ENCODE measurements at regions of chr15 and their contacts with region 1.

Region 1: DNA sequence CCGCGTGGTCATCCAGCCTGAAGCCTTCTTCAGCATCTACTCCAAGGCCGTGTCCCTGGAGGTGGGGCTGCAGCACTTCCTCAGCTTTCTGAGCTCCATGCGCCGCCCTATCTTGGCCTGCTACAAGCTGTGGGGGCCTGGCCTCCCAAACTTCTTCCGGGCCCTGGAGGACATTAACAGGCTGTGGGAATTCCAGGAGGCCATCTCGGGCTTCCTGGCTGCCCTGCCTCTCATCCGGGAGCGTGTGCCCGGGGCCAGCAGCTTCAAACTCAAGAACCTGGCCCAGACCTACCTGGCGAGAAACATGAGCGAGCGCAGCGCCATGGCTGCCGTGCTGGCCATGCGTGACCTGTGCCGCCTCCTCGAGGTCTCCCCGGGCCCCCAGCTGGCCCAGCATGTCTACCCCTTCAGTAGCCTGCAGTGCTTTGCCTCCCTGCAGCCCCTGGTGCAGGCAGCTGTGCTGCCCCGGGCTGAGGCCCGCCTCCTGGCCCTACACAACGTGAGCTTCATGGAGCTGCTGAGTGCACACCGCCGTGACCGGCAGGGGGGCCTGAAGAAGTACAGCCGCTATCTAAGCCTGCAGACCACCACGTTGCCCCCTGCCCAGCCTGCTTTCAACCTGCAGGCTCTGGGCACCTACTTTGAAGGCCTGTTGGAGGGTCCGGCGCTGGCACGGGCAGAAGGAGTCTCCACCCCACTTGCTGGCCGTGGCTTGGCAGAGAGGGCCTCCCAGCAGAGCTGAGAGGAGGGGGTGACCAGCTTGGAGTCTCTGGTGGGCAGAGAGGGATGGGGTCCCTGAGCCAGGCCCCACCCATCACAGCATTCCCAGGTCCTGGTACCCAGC is 37.9 kb downstream of the GOLGA6A start:
- DNase-seq: no peak
- ATAC-seq: no peak
- H3K4me3 Mint-ChIP-seq: no peak overlapping the region
- H3K27ac Mint-ChIP-seq: no peak overlapping the region
- H3K4me1 Mint-ChIP-seq: peaks cover 21% of the 10 kb centered on the region
- H3K27me3 Mint-ChIP-seq: peaks cover 6% of the 10 kb centered on the region; the same call in 1 of the 2 replicates
- CTCF ChIP-seq: no peak

Region 2: DNA sequence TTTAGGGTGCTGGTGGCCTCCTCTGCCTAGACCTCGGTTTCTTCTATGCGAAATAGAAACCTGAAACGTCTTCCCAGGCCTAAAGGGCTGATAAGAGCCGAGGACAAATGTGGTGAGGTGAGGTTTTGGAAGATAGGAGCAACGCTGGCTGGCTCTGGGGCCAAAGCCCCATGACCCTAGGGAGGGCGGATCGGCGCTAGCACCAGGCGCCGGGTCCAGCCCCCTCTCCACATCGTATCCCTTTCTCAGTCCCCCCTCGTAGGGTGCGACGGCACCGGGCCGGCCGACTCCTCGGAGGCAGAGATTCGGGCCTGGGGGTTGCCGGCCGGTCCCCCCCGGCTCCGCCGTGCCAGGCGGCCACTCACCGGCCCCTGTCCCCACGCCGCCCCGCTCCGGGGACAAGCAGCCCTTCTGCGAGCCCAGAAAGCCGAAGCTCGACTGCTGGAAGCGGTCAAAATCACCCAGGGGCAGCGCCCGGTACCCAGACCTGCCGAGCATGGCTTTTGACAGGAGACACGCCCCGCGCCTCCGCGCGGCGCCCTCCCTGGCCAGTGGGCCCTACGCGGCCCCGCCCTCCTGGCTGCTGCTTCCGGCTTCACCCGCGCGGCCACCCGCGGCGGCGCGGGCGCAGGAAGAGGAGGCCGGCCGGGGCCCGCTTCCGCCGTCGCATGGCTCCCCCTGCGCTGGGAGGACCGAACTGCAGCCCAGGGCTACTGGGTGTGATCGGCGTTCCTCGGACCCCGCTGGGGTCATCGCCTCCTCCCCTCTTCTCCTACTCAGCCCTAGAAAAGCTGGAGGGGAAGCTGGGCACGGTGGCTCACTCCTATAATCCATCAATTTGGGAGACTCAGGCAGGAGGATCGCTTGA is 52.5 kb before region 1 on chr15 and contains the start of gene STOML1:
- CTCF ChIA-PET with region 1: interaction called, 89 read pairs
- POLR2A ChIA-PET with region 1: interaction called, 3 read pairs
- DNase-seq: peak; percentile 97
- ATAC-seq: peak; percentile 68
- H3K4me3 Mint-ChIP-seq: peak within 1 kb of the TSS; percentile 74
- H3K27ac Mint-ChIP-seq: no peak within 1 kb of the TSS
- H3K4me1 Mint-ChIP-seq: peaks cover 30% of the 10 kb centered on the region
- H3K27me3 Mint-ChIP-seq: peaks cover 13% of the 10 kb centered on the region
- CTCF ChIP-seq: peak; percentile 81
- total RNA-seq, gene STOML1: 5.0 to 5.5 TPM (median 5.4 TPM) in 3 replicates

Region 3: DNA sequence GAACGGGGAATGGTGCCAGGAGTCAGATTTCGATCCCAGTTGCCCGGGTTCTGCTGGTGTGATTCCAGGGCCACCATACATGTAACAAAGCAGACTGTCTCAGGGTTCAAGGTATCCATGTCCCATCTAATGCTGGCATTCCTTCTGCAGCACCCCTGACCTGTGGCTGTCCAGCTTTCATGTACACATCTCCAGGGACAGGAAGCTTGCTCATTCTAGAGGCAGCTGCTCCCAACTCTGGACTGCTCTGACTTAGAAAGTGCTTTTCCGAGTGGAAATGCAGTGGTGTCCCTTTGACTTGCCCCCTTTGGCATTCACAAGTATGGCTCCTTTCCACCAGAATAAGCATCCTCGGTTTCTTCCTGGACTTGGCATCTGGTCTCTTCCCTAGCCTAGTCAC is 19.1 kb before region 1 on chr15:
- CTCF ChIA-PET with region 1: interaction called, 11 read pairs
- POLR2A ChIA-PET with region 1: no interaction called
- DNase-seq: no peak
- ATAC-seq: no peak
- H3K4me3 Mint-ChIP-seq: no peak overlapping the region
- H3K27ac Mint-ChIP-seq: no peak overlapping the region
- H3K4me1 Mint-ChIP-seq: no peaks in the 10 kb centered on the region
- H3K27me3 Mint-ChIP-seq: no peaks in the 10 kb centered on the region
- CTCF ChIP-seq: no peak

Region 4: DNA sequence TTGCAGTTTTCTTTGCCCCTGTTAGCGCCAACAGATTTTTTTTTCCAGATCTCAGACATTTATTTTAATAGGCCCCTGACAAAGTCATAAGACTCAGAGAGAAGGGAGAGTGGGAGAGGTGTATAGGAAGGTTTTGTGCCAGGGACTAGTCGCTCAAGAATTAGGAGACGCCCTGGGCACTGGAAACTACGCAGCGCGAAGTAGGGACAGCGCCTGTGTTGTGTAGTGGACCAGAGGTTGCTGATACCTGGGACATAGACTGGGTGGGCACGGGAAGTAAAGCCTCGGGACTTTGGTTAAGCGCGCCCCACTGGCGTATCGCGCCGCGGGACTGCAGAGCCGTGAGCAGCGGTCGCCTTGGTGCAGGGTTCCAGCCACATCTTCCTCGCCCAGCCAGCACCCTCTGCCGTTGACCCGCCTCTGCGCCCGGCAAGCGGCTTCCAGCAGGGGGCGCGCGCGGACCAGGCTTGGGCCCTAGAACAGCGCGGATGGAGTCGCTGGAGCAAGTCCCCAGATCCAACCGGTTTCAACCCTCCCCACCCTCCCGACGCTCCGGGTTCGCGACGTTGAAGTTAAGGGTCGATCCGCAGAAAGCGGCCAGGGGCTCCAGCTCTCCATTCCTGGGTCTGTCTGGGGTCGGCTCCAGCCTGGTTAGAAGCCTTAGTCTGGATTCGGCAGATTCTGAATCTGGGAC is 82.9 kb after region 1 on chr15:
- CTCF ChIA-PET with region 1: interaction called, 19 read pairs
- POLR2A ChIA-PET with region 1: interaction called, 9 read pairs
- DNase-seq: peak; percentile 98
- ATAC-seq: peak; percentile 69
- H3K4me3 Mint-ChIP-seq: peak overlapping the region; percentile 73
- H3K27ac Mint-ChIP-seq: no peak overlapping the region
- H3K4me1 Mint-ChIP-seq: peaks cover 60% of the 10 kb centered on the region
- H3K27me3 Mint-ChIP-seq: peaks cover 76% of the 10 kb centered on the region
- CTCF ChIP-seq: peak; percentile 99

Region 5: GRCh38 chr15:74302821-74303359 is 258.4 kb after region 1 on chr15:
- CTCF ChIA-PET with region 1: interaction called, 45 read pairs
- POLR2A ChIA-PET with region 1: no interaction called
- DNase-seq: peak; percentile 86
- ATAC-seq: peak; percentile 67
- H3K4me3 Mint-ChIP-seq: peak overlapping the region; percentile 37
- H3K27ac Mint-ChIP-seq: no peak overlapping the region
- H3K4me1 Mint-ChIP-seq: peaks cover 79% of the 10 kb centered on the region
- H3K27me3 Mint-ChIP-seq: peaks cover 57% of the 10 kb centered on the region
- CTCF ChIP-seq: peak; percentile 80

Region 6: GRCh38 chr15:74315626-74316025 is 271.1 kb after region 1 on chr15:
- CTCF ChIA-PET with region 1: interaction called, 18 read pairs
- POLR2A ChIA-PET with region 1: no interaction called
- DNase-seq: no peak
- ATAC-seq: no peak
- H3K4me3 Mint-ChIP-seq: no peak overlapping the region
- H3K27ac Mint-ChIP-seq: no peak overlapping the region
- H3K4me1 Mint-ChIP-seq: peaks cover 63% of the 10 kb centered on the region
- H3K27me3 Mint-ChIP-seq: no peaks in the 10 kb centered on the region; the same call in 1 of the 2 replicates
- CTCF ChIP-seq: no peak